GM12878 (cell line): ENCODE measurements at regions of chr13 and their contacts with region 1.

Region 1: GRCh38 chr13:75694722-75695121 is 58.6 kb downstream of the LMO7 start:
- DNase-seq: no peak
- ATAC-seq: no peak
- H3K4me3 ChIP-seq: no peak overlapping the region
- H3K27ac ChIP-seq: no peak overlapping the region
- H3K4me1 ChIP-seq: no peaks in the 10 kb centered on the region
- H3K27me3 ChIP-seq: no peaks in the 10 kb centered on the region
- CTCF ChIP-seq: no peak
- EP300 ChIP-seq: no peak
- POLR2A ChIP-seq: no peak
- RAD21 ChIP-seq: no peak

Region 2: GRCh38 chr13:75458696-75459422 is 235.9 kb before region 1 on chr13:
- CTCF ChIA-PET with region 1: no interaction called
- POLR2A ChIA-PET with region 1: no interaction called
- RAD21 ChIA-PET with region 1: no interaction called
- SMC1A ChIA-PET with region 1: no interaction called
- in situ Hi-C with region 1: no loop called
- intact Hi-C with region 1: no loop called
- DNase-seq: peak; percentile 49
- ATAC-seq: peak; percentile 99
- H3K4me3 ChIP-seq: no peak overlapping the region
- H3K27ac ChIP-seq: peak overlapping the region; percentile 65
- H3K4me1 ChIP-seq: peaks cover 16% of the 10 kb centered on the region
- H3K27me3 ChIP-seq: no peaks in the 10 kb centered on the region
- CTCF ChIP-seq: no peak
- EP300 ChIP-seq: no peak
- POLR2A ChIP-seq: no peak
- RAD21 ChIP-seq: no peak

Region 3: DNA sequence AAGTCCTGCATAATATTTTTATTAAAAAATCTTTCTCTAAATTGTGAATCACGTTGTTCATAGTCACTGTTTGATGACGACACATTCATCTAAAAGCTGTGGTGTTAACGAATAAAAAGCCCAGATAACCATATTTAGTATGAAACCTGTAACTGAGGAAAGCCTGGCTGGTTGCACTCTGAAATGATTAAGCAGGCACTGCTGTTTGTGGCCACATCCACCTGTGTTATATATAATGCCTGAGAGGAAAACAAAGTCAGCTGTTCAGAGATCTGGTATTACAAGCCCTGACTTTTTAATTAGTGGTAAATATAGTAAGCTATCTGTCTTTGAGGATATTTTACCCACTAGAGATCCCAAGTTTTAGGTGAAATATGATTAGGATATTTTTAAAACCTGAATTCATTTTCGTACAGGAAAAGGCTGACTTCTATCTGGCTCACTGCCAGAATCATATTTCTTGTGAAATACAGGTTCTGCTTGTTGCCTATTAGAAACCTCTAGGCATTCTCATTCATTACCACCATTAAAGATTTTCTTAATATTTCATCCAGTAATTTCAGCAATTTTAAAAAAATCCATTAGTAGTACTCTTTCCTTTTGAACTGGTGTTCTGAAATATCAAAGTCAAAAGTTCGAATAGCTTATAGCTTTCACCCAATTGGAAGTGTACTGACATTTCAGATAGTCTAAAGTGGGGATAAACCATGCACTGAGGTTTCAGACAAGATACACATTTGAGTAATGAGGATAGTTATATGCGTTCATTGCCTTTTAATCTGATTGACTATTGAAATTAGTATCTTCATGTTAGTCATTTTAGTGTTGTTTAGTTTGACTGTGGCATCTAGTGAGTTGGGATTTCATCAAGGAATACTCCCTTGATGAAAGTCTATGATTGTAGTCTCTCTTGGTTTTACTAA is 21.1 kb after region 1 on chr13:
- CTCF ChIA-PET with region 1: interaction called, 27 read pairs
- POLR2A ChIA-PET with region 1: no interaction called
- RAD21 ChIA-PET with region 1: interaction called, 16 read pairs
- SMC1A ChIA-PET with region 1: interaction called, 25 read pairs
- in situ Hi-C with region 1: no loop called
- intact Hi-C with region 1: no loop called
- DNase-seq: peak; percentile 41
- ATAC-seq: peak; percentile 96
- H3K4me3 ChIP-seq: no peak overlapping the region
- H3K27ac ChIP-seq: peak overlapping the region; percentile 35; the same call in 1 of the 2 replicates
- H3K4me1 ChIP-seq: no peaks in the 10 kb centered on the region
- H3K27me3 ChIP-seq: no peaks in the 10 kb centered on the region
- CTCF ChIP-seq: no peak
- EP300 ChIP-seq: no peak
- POLR2A ChIP-seq: no peak
- RAD21 ChIP-seq: no peak

Region 4: DNA sequence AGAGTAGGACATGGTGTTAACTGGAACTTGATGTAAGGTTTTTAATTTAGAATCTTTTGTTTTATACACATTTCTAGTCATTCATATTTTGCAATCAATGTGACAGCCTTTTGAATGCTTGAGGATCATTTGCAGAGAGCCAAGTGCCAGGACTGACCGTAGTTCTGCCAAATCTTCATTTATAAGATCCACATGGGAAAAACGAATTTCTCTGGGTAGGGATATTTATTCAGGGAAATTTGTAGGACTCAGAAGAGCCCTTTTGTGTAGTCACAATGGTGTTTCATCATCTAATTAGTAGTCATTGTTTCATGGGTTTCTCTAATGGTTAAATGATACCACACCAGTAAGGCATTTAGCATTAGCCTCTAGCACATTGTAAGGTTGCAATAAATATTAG is 102.5 kb after region 1 on chr13:
- CTCF ChIA-PET with region 1: interaction called, 76 read pairs
- POLR2A ChIA-PET with region 1: interaction called, 3 read pairs
- RAD21 ChIA-PET with region 1: interaction called, 61 read pairs
- SMC1A ChIA-PET with region 1: interaction called, 64 read pairs
- in situ Hi-C with region 1: no loop called
- intact Hi-C with region 1: loop called (anchors 5 kb)
- DNase-seq: no peak
- ATAC-seq: no peak
- H3K4me3 ChIP-seq: no peak overlapping the region
- H3K27ac ChIP-seq: no peak overlapping the region
- H3K4me1 ChIP-seq: no peaks in the 10 kb centered on the region
- H3K27me3 ChIP-seq: no peaks in the 10 kb centered on the region
- CTCF ChIP-seq: no peak
- EP300 ChIP-seq: no peak
- POLR2A ChIP-seq: no peak
- RAD21 ChIP-seq: no peak

Region 5: DNA sequence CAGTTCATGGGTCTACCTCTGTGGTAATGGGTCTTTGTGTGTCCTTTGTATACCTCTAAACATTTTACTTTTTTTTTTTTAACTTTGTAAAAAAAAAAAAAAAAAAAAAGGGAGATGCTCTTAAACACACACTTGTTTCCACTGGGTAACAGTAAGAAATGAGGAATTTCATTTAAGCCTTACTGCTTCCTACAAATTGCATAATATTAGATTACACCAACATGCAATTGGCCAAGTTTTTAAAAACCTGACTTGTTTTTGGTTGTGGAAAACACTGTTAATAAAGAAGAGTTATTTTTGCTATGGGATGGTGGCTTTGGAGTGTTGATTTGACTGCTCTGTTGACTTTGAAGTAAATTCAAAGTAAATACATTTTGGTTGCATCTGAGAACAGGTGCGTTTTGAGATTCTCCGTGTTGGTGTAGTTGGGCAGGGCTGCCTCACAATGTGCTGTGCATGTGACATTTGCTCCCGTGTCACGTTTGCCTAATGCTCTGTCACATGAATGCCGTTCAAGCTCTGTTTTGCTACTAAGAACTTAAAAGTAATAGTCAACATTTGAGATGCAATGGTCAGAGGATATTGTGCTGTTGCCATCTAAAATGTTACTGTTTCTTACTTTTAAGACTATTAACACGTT is 143.8 kb after region 1 on chr13:
- CTCF ChIA-PET with region 1: interaction called, 14 read pairs
- POLR2A ChIA-PET with region 1: no interaction called
- RAD21 ChIA-PET with region 1: interaction called, 15 read pairs
- SMC1A ChIA-PET with region 1: interaction called, 5 read pairs
- in situ Hi-C with region 1: no loop called
- intact Hi-C with region 1: no loop called
- DNase-seq: no peak
- ATAC-seq: no peak
- H3K4me3 ChIP-seq: no peak overlapping the region
- H3K27ac ChIP-seq: no peak overlapping the region
- H3K4me1 ChIP-seq: no peaks in the 10 kb centered on the region
- H3K27me3 ChIP-seq: no peaks in the 10 kb centered on the region
- CTCF ChIP-seq: no peak
- EP300 ChIP-seq: no peak
- POLR2A ChIP-seq: no peak
- RAD21 ChIP-seq: no peak

Region 6: GRCh38 chr13:75870397-75870903 is 175.7 kb after region 1 on chr13:
- CTCF ChIA-PET with region 1: interaction called, 296 read pairs
- POLR2A ChIA-PET with region 1: no interaction called
- RAD21 ChIA-PET with region 1: interaction called, 184 read pairs
- SMC1A ChIA-PET with region 1: interaction called, 228 read pairs
- in situ Hi-C with region 1: loop called (anchors 5 kb)
- intact Hi-C with region 1: loop called (anchors 1 kb)
- DNase-seq: no peak
- ATAC-seq: no peak; the same call in 2 of the 3 replicates
- H3K4me3 ChIP-seq: no peak overlapping the region
- H3K27ac ChIP-seq: no peak overlapping the region
- H3K4me1 ChIP-seq: 0 out of 2 replicates have a peak, but pooled peaks cover 3% of the 10 kb centered on the region
- H3K27me3 ChIP-seq: no peaks in the 10 kb centered on the region; a peak in 1 of 4 replicates
- CTCF ChIP-seq: peak; percentile 65 to 76 (median 68)
- EP300 ChIP-seq: no peak
- POLR2A ChIP-seq: no peak
- RAD21 ChIP-seq: peak; percentile 66

Region 7: DNA sequence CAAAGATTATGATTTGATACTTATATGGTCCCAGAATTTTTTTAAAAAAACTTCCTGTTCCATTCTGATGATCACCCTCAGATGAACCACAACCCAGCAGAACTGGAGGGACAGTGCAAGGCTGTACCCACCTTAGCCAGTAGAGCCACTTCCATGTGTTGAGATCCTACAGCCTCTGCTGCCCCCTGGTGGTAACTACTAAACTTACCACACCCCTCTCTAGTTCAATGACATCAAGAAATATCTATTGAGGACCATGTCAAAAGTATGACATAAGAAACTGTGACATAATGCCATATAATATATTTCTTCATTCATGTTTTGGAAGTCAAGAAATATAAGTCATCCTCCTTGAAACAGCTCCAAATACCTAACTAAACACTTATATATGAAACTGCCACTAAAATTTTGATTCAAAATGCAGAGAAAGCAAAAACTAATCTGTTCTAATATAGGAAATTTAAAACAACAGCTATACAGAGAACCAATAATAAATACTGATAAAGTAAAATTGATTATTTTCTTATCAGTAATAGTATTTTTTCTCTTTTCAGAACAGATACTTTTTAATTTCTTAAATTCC is 778.9 kb after region 1 on chr13:
- CTCF ChIA-PET with region 1: interaction called, 23 read pairs
- POLR2A ChIA-PET with region 1: no interaction called
- RAD21 ChIA-PET with region 1: interaction called, 11 read pairs
- SMC1A ChIA-PET with region 1: interaction called, 6 read pairs
- in situ Hi-C with region 1: loop called (anchors 5 kb)
- intact Hi-C with region 1: loop called (anchors 1 kb)
- DNase-seq: peak; percentile 25
- ATAC-seq: peak; percentile 100
- H3K4me3 ChIP-seq: no peak overlapping the region
- H3K27ac ChIP-seq: no peak overlapping the region
- H3K4me1 ChIP-seq: no peaks in the 10 kb centered on the region
- H3K27me3 ChIP-seq: no peaks in the 10 kb centered on the region
- CTCF ChIP-seq: peak; percentile 68 to 85 (median 84)
- EP300 ChIP-seq: no peak
- POLR2A ChIP-seq: no peak
- RAD21 ChIP-seq: peak; percentile 96